ENCODE measurements at regions of chr2 and their contacts with region 1.

Region 1: DNA sequence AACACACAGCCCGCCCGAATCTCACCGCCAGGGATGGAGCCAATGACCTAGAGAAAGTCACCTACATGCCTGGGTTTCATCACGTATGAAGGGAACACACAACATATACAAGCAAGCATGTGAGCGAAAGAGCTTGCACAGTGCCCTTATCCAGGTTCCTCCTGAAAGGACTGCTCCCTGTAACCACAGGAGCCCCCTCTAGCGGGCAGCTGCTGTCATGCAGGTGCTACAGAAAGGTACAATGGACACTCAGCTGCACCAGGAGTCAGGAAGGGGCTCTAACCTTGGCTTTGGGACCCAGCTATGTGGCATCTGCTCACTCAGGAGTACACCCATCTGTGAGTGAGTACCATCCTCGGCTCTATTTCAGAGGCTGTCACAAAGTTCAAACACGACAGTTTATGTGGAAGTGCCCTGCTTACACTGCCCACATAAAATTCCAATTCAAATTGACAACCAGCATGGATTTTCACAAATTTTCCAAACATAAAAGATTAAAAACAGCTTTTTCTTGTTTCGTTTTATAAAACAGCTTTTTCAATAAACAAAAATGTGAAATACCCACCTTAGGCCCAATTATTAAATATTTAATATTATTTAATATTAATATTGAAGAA is 3.5 kb downstream of the NDUFA10 start:
- DNase-seq: peak in 1 of 2 donors; percentile 56
- ATAC-seq: peak in 1 of 2 donors; percentile 22
- H3K4me3 ChIP-seq: no peak overlapping the region
- H3K27ac ChIP-seq: no peak overlapping the region
- H3K4me1 ChIP-seq: peaks cover 17 to 31% of the 10 kb centered on the region in 2 donors
- H3K27me3 ChIP-seq: no peaks in the 10 kb centered on the region
- CTCF ChIP-seq: peak; percentile 37 to 80 (median 64)
- POLR2A ChIP-seq: no peak

Region 2: DNA sequence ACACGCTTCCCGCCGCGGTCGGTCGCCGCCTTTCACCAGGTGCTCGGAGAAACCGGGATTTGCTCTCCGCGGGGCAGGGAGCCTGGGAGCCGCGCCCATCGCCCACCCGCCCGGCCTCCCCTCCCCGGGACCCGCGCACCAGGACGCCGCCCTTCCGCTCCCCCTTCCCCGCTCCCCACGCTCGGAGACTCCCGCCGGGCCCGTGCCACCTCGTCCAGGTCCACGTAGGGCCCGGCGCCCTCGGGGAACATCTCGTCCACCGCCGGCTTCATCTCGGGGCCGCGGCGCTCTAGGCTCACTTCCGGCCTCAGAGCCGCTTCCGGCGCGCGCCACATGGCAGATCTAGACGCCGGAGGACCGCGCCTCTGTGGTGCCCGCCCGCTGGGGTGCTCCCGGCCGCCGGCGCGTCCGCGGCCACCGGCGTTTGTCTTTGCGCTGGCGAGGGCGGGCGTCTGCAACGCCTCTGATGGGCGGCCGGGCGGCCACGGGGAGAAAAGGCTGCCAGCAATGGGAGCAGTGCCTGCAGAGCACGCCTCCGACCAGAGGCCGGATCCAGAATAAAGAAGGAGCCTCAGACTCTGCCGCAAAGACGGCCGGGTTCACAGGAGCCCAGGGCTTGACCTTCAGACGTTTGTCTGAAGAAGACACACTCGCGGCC is 114.5 kb after region 1 on chr2 and contains the start of gene COPS9:
- in situ Hi-C with region 1: no loop called
- intact Hi-C with region 1: loop called (anchors 1 kb)
- DNase-seq: peak; percentile 73 to 81
- ATAC-seq: peak; percentile 84 to 93
- H3K4me3 ChIP-seq: peak within 1 kb of the TSS; percentile 75 to 97 (median 90)
- H3K27ac ChIP-seq: peak within 1 kb of the TSS; percentile 71 to 89 (median 82)
- H3K4me1 ChIP-seq: peaks cover 23 to 26% of the 10 kb centered on the region in 2 donors
- H3K27me3 ChIP-seq: no peaks in the 10 kb centered on the region
- CTCF ChIP-seq: peak in 1 of 5 experiments; percentile 6
- POLR2A ChIP-seq: peak; percentile 52 to 72
- total RNA-seq, gene COPS9: 163 to 219 (median 193) TPM